Aorta (tissue), 5 donors: ENCODE measurements at regions of chr15 and their contacts with region 1.

Region 1: GRCh38 chr15:66700802-66701421 is 1.1 kb upstream of the SMAD6 start:
- DNase-seq: peak; percentile 97 to 98
- ATAC-seq: peak; percentile 85
- H3K4me3 ChIP-seq: peak overlapping the region; percentile 29 to 88
- H3K27ac ChIP-seq: peak overlapping the region; percentile 59 to 75
- H3K4me1 ChIP-seq: no peaks in the 10 kb centered on the region
- H3K27me3 ChIP-seq: no peaks in the 10 kb centered on the region

Region 2: DNA sequence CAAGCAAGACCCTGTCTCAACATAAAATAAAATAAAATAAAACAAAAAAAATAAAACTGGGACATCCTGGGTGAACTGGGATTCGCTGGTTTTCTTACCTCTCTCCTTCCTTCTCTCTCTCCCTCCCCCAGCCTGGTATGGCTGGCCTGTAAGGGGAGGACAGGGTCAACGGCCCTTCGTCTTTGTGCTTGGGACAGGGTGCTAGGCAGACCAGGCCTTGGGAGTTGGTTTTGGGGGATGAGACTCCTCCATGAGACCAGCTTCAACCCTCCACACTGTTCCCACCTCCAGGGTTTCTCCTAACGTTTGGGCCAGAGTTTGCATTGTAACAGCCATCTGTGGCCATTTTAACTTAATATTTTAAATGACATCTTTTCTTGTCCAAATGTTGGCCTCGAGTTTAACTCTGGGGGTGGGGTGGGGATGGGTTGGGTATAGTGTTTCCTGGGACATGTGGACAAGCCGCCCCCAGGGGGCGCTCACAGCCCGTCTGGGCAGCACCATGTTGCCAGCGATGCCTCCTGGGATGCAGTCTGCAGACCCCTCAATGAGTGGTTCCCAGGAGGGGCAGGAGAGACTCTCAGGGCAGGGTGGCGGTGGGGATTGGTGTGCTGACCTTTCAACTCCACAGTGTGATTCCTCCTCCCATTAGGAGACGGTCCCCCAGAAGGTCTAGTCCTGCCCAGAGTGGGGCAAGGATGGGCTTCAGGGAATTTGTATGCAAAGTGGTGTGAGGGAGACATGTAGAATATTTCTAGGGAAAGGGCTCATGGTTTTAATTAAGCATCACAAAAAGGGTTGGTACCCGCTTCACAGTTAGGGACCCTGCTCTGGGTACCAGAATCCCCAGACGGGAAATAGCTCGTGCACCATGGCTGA is 97.4 kb before region 1 on chr15:
- intact Hi-C with region 1: loop called in 1 of 2 experiments (anchors 5 kb)
- DNase-seq: peak; percentile 78 to 90
- ATAC-seq: peak; percentile 83
- H3K4me3 ChIP-seq: no peak overlapping the region
- H3K27ac ChIP-seq: no peak overlapping the region
- H3K4me1 ChIP-seq: no peaks in the 10 kb centered on the region
- H3K27me3 ChIP-seq: no peaks in the 10 kb centered on the region

Region 3: GRCh38 chr15:66619151-66619903 is 81.6 kb before region 1 on chr15:
- intact Hi-C with region 1: loop called (anchors 2 kb)
- DNase-seq: peak; percentile 86 to 92
- ATAC-seq: peak; percentile 86
- H3K4me3 ChIP-seq: no peak overlapping the region
- H3K27ac ChIP-seq: no peak overlapping the region
- H3K4me1 ChIP-seq: no peaks in the 10 kb centered on the region
- H3K27me3 ChIP-seq: no peaks in the 10 kb centered on the region

Region 4: DNA sequence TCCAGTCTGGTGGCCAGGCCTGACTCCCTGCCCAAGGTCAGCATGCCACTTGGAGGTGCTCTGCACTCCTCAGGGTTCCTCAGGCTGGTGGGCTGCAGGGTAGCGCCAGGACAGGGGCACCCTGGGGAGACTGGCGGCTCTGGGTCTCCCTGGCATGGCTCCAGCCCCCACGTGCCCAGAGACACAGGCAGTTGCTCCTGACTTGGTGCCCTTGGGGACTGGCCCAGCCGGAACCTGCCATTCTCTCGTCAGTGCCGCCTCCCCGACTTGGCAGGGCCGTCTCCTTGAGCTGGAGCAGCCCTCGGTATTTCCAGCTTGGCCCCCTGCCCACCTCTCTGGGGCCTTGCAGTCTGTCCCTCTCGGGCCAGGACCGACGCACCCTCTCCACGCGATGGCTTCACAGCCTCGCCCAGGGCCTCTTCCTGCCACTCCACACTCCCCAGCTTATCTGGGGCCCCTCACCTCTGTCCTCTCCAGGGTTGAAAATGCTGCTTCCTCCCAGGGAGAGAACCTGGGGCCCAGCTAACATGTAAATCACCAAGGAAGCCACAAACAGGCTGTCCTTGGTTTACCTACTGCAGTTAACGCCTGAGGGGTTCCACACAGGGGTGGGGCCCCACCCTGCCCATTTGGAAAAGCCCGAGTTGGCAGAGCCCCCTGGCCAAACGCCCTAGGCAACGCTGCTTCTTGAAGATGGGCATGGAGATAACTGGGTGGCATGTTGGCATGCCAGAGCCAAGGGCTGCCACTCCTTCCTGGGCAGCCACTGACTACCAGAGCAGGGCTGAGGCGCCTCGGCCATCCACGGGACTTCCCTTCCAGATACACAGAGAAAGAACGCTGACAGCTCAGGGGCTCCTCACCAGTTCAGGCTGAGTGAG is 62.5 kb after region 1 on chr15:
- intact Hi-C with region 1: no loop called
- DNase-seq: peak; percentile 96 to 97
- ATAC-seq: peak; percentile 87
- H3K4me3 ChIP-seq: no peak overlapping the region
- H3K27ac ChIP-seq: peak overlapping the region; percentile 24 to 82
- H3K4me1 ChIP-seq: peaks cover 3 to 7% of the 10 kb centered on the region in 2 donors
- H3K27me3 ChIP-seq: no peaks in the 10 kb centered on the region

Region 5: DNA sequence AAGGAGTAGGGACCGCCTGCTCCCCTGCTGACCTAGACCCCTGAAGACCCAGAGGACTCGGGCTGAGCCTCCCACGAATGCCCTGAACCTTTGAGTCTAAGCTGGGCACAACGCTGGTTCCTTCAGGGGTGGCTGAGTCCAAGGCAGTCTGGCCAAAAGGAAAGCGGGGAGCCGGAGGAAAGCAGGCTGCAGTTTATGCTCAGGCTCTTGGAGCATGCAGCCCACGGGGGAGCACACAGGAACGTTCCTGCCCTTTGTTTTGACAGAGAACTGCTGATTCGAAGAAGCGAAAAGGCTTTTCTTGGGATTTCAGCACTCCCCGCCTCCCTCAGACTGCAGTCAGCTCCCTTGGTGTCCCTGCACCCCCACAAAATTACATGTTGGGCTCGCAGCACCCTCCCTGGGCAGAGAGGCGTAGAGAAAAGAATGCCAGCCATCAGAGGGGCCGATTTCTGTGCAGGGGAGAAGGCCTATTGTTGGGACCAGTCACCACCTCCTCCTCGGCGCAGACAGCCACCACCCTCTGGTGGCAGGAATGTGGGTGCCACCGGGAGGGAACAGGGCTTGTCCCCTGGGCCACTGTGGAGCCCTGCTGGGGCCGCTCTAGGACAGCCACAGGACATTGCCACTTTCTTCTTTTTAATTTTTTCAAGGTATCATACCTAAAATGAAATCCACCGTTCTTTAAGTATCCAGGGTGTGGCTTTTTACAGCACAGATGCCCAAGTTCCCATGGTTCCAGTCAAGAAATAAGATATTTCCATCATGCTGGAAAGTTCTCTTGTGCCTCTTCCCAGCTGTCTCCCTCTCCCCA is 73.3 kb after region 1 on chr15:
- intact Hi-C with region 1: loop called (anchors 2 kb)
- DNase-seq: peak; percentile 89 to 97
- ATAC-seq: peak; percentile 92
- H3K4me3 ChIP-seq: no peak overlapping the region
- H3K27ac ChIP-seq: peak overlapping the region; percentile 52 to 58
- H3K4me1 ChIP-seq: no peaks in the 10 kb centered on the region
- H3K27me3 ChIP-seq: no peaks in the 10 kb centered on the region

Region 6: DNA sequence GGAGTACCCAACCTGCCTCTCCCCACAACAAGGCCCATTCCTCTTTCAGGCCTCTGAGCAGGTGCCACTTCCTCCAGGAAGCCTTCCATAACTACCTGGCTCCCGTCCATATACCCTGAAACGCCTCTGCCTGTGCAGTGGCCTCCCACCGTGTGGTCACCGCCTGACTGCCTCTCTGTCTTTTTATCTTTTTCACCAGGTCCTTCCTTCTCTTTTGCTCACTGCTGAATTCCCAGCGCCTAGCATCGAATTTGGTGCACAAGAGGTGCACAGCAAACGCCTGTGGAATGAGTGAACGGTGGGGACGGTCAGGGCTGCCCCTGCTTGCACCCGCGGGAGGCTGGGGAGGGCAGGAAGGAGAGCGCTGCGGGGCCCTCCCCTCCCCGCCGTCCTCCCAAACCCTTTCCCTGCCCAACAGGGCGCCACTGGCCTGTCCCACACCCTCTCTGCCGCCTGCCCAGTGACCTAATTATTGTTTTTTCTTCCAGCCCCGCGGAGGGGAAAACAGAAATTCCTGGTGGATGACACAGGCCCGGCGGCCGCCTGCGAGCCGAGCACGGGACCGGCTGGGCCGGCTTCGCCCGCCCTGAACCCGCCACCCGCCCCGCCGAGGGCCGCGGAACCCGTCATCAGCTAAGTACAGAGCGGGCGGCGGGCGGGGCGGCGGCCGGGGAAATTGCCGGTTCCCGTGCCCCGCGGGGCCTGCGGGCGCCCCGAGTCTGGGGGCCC is 141.2 kb after region 1 on chr15:
- intact Hi-C with region 1: loop called in 1 of 2 experiments (anchors 2 kb)
- DNase-seq: peak; percentile 94 to 98
- ATAC-seq: peak; percentile 93
- H3K4me3 ChIP-seq: peak overlapping the region; percentile 46 to 81
- H3K27ac ChIP-seq: peak overlapping the region; percentile 98
- H3K4me1 ChIP-seq: no peaks in the 10 kb centered on the region
- H3K27me3 ChIP-seq: no peaks in the 10 kb centered on the region